Activated CD4-positive, alpha-beta memory T cell treated with anti-CD3 and anti-CD28 coated beads for 36 hours (primary cell): ENCODE measurements at regions of chr15 and their contacts with region 1.

Region 1: GRCh38 chr15:81265944-81266775 is 57.8 kb downstream of the STARD5 start:
- DNase-seq: peak; percentile 90
- H3K4me3 Mint-ChIP-seq: peak overlapping the region; percentile 54
- H3K27ac Mint-ChIP-seq: no peak overlapping the region
- H3K4me1 Mint-ChIP-seq: peaks cover 18% of the 10 kb centered on the region
- H3K27me3 Mint-ChIP-seq: peaks cover 8% of the 10 kb centered on the region

Region 2: DNA sequence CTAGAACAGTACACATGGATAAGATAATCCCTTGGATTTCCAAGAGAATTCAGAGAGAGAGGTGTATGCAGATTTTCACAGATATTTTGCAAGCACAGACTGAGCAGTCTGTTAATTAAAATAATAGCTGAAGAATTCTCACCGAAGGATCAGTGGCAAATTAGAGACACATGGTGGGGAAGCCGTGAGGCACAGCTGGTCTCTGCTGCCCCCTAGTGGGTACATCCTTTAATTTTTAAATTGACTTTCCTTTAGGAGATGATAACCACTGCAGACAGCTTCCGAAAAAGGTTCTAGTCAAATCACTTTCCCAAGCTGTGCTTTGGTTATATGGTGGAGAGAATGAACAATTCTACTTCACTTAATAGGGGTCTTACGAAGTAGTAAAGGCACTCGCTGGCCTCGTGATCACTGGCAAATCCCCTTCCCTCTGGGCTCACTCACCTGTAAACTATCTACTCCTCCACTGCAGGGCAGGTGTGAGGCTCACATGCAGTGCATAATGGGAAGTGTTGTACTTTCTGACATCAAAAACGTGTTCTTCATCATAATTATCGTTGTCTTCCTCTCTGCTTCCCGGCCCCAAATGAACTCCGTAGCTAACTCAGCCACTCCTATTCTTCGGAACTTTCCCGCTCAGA is 296.0 kb before region 1 on chr15:
- CTCF ChIA-PET with region 1: interaction called, 48 read pairs
- POLR2A ChIA-PET with region 1: no interaction called
- intact Hi-C with region 1: no loop called
- DNase-seq: peak; percentile 67
- H3K4me3 Mint-ChIP-seq: no peak overlapping the region
- H3K27ac Mint-ChIP-seq: no peak overlapping the region
- H3K4me1 Mint-ChIP-seq: peaks cover 9% of the 10 kb centered on the region
- H3K27me3 Mint-ChIP-seq: no peaks in the 10 kb centered on the region

Region 3: GRCh38 chr15:81098861-81099651 is 167.1 kb before region 1 on chr15:
- CTCF ChIA-PET with region 1: interaction called, 44 read pairs
- POLR2A ChIA-PET with region 1: no interaction called
- intact Hi-C with region 1: no loop called
- DNase-seq: no peak
- H3K4me3 Mint-ChIP-seq: no peak overlapping the region
- H3K27ac Mint-ChIP-seq: no peak overlapping the region
- H3K4me1 Mint-ChIP-seq: peaks cover 7% of the 10 kb centered on the region
- H3K27me3 Mint-ChIP-seq: peaks cover 40% of the 10 kb centered on the region

Region 4: GRCh38 chr15:81155375-81156218 is 110.6 kb before region 1 on chr15:
- CTCF ChIA-PET with region 1: interaction called, 259 read pairs
- POLR2A ChIA-PET with region 1: no interaction called
- intact Hi-C with region 1: loop called (anchors 1 kb)
- DNase-seq: no peak
- H3K4me3 Mint-ChIP-seq: no peak overlapping the region
- H3K27ac Mint-ChIP-seq: no peak overlapping the region
- H3K4me1 Mint-ChIP-seq: no peaks in the 10 kb centered on the region
- H3K27me3 Mint-ChIP-seq: no peaks in the 10 kb centered on the region

Region 5: DNA sequence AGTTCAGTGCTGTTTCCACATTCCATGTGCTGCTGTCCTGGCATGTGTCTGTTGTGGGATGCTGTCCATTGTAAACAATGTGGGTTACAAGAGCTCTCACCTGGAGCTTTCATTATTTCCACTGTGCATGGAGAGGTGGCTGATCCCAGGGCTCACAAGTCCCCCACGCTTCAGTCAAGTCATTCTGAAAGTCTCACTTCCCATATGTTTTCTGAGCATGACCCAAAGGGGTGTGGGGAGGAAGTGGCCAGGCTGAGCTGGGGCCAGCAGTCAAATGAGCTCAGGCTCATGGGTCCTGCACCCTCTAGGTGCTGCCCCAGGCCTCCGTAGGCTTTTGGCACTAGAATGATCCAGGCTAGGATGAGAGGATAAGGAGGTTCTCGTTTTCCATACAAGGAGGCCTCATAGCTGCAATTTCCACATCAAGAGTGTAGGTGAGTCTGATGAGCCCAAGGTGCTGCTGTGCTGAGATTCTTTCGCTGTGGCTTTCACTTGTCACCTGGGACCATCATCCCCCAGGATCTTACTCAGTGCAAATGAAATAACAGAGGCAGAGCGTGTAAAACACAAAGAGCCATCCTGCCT is 35.7 kb after region 1 on chr15:
- CTCF ChIA-PET with region 1: interaction called, 37 read pairs
- POLR2A ChIA-PET with region 1: no interaction called
- intact Hi-C with region 1: no loop called
- DNase-seq: peak; percentile 74
- H3K4me3 Mint-ChIP-seq: peak overlapping the region; percentile 99
- H3K27ac Mint-ChIP-seq: peak overlapping the region; percentile 99
- H3K4me1 Mint-ChIP-seq: peaks cover 77% of the 10 kb centered on the region
- H3K27me3 Mint-ChIP-seq: no peaks in the 10 kb centered on the region

Region 6: GRCh38 chr15:81379269-81379668 is 113.1 kb after region 1 on chr15:
- CTCF ChIA-PET with region 1: interaction called, 11 read pairs
- POLR2A ChIA-PET with region 1: no interaction called
- intact Hi-C with region 1: no loop called
- DNase-seq: no peak
- H3K4me3 Mint-ChIP-seq: no peak overlapping the region
- H3K27ac Mint-ChIP-seq: no peak overlapping the region
- H3K4me1 Mint-ChIP-seq: no peaks in the 10 kb centered on the region
- H3K27me3 Mint-ChIP-seq: no peaks in the 10 kb centered on the region